KBM-7 (cell line): ENCODE measurements at regions of chr10 and their contacts with region 1.

Region 1: DNA sequence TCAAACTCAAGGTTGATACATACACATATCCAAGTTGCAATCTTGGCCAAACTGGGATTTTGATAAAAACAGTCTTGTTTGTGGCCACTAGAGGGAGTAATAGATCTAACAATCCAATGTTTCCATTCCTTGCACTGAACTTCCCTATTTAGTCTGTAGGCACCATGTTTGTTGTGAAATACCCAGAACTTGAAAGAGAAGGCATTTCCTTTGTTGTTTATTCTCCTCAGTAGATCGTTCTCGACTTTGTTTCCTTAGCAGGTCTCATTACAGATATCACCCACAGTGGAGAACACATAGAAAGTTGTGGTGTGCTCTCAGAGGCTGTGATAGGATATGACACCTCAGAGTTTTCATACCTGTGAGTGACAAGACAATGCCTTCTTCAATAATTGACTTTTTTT is 70.3 kb upstream of the MXI1 start:
- DNase-seq: peak; percentile 91

Region 2: DNA sequence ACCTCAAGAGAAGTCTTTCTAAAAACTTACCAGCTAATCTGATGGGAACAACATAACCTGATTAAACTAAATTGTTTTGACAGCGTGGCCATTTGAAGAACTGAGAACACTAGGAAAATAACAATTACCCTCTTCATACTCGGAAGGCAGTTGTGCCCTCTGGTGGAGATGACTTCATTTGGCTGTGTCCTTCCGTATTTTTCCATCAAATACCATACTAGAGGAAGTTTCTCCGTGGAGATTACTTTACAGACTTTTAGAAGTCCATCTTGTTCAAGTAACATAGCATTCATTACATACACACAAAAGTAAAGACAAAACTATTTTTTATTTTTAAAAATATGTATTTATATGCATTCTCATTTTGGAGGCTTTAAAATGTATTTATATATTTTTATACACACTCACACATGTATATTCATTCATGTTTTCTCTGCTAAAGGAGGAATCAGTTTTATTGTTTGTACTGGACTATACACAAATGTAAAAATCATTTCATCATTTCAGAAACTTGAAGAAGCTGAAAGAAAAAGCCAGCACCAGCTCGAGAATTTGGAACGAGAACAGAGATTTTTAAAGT is 142.4 kb after region 1 on chr10:
- in situ Hi-C with region 1: loop called (anchors 25 kb)
- DNase-seq: peak; percentile 83